Right lobe of liver (tissue), 6 donors: ENCODE measurements at regions of chr10 and their contacts with region 1.

Region 1: GRCh38 chr10:71285180-71285545 is 33.9 kb upstream of the SLC29A3 start:
- DNase-seq: peak in 2 of 3 donors; percentile 42 to 62
- ATAC-seq: peak; percentile 71 to 82 (median 76)
- H3K4me3 ChIP-seq: no peak overlapping the region
- H3K27ac ChIP-seq: no peak overlapping the region
- H3K4me1 ChIP-seq: peaks cover 0 to 8% (median under 1%) of the 10 kb centered on the region in 4 donors
- H3K27me3 ChIP-seq: no peaks in the 10 kb centered on the region
- CTCF ChIP-seq: peak; percentile 59 to 79 (median 72)
- POLR2A ChIP-seq: no peak

Region 2: GRCh38 chr10:70925377-70926225 is 359.6 kb before region 1 on chr10:
- intact Hi-C with region 1: loop called (anchors 5 to 10 kb)
- DNase-seq: peak in 1 of 3 donors; percentile 44
- ATAC-seq: peak; percentile 74 to 87 (median 84)
- H3K4me3 ChIP-seq: no peak overlapping the region
- H3K27ac ChIP-seq: no peak overlapping the region
- H3K4me1 ChIP-seq: no peaks in the 10 kb centered on the region
- H3K27me3 ChIP-seq: no peaks in the 10 kb centered on the region
- CTCF ChIP-seq: peak; percentile 87 to 95 (median 94)
- POLR2A ChIP-seq: no peak

Region 3: GRCh38 chr10:70931168-70931815 is 353.9 kb before region 1 on chr10:
- intact Hi-C with region 1: loop called (anchors 5 to 10 kb)
- DNase-seq: no peak
- ATAC-seq: no peak
- H3K4me3 ChIP-seq: no peak overlapping the region
- H3K27ac ChIP-seq: no peak overlapping the region
- H3K4me1 ChIP-seq: no peaks in the 10 kb centered on the region
- H3K27me3 ChIP-seq: no peaks in the 10 kb centered on the region
- CTCF ChIP-seq: no peak
- POLR2A ChIP-seq: no peak

Region 4: GRCh38 chr10:71161425-71161824 is 123.7 kb before region 1 on chr10:
- intact Hi-C with region 1: no loop called
- DNase-seq: no peak
- ATAC-seq: no peak
- H3K4me3 ChIP-seq: no peak overlapping the region
- H3K27ac ChIP-seq: no peak overlapping the region
- H3K4me1 ChIP-seq: no peaks in the 10 kb centered on the region
- H3K27me3 ChIP-seq: no peaks in the 10 kb centered on the region
- CTCF ChIP-seq: no peak
- POLR2A ChIP-seq: no peak